ENCODE measurements at regions of chr18 and their contacts with region 1.

Region 1: DNA sequence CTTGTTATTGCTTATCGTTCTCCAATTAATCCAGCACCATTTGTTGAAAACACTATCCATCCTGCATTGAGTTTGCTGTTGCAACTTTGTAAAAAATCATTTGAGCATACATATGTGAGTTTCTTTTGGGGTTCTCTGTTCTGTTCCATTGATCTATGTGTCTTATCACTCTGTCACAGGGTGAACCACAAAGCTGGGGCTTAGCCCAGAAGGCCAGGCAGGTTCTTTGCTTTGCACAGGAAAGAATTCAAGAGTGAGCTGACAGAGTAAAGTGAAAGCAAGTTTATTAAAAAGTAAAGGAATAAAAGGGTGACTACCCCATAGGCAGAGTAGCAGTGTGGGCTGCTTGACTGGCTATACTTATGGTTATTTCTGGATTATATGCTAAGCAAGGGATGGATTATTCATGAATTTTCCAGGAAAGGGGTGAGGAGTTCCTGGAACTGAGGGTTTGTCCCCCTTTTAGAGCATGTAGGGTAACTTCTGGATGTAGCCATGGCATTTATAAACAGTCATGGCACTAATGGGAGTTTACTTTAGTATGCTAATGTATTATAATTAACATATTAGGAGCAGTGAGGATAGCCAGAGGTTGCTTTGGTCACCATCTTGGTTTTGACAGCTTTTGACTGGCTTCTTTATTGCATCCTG is 46.8 kb downstream of the RNF138 start:
- DNase-seq: no peak
- H3K4me3 ChIP-seq: no peak overlapping the region
- H3K27ac ChIP-seq: no peak overlapping the region
- H3K27me3 ChIP-seq: no peaks in the 10 kb centered on the region
- CTCF ChIP-seq: no peak

Region 2: DNA sequence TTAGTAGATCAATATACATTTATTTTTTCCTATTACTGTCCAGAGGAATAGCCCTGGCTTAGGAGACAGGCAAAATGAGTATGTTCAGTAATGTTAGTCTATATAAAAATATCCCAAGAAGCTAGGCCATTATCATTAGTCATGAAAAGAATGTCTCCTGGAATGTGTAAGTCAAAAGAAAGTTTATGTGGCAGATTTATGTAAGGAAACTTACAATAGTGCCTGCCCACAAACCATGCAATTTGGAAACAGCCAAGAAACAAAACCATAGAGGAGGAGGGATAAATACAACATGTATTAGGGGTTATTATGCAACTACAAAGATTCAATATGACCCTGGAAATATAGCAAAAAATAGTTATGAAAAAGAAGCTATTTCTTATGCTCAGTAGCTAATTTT is 1990.0 kb after region 1 on chr18:
- CTCF ChIA-PET with region 1: interaction called, 10 read pairs
- POLR2A ChIA-PET with region 1: no interaction called
- DNase-seq: no peak
- H3K4me3 ChIP-seq: no peak overlapping the region
- H3K27ac ChIP-seq: no peak overlapping the region
- H3K27me3 ChIP-seq: no peaks in the 10 kb centered on the region
- CTCF ChIP-seq: no peak